ENCODE measurements at regions of chr11 and their contacts with region 1.

Region 1: DNA sequence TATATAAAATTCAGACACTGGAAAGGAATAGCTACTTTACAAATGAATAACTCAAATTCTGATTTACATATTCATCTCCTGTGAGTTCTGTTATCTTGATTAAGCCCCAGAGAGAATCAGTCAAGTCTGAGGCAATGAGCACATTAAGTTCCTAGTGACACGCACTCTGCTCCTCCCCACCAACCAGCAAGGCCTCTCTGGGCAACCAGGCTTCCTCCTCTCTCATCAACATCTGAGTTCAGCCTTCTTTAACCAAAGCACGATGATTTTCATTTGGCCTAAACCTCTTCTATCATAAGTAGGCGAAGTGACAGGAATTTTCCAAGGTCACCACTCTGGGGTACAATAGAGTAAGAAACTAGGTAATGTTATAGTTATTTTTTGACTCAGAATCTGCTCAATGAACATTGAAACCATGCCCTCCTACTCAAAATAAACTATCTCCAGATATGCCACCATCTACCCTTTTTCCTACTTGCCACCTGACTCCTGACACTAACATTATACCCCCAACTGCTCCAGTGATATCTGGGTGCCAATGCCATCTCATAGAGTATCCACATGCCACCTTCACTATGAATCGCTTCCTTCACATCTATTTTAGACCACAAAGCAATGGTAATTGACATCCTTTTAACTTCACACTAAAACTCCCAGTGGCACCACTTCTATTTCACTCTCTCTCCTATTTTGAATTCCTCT is 114.8 kb downstream of the FAM76B start:
- DNase-seq: peak in 7 of 14 experiments; percentile 9 to 39 (median 25)
- ATAC-seq: peak; percentile 64
- H3K4me3 ChIP-seq: no peak overlapping the region
- H3K4me3 Mint-ChIP-seq: no peak overlapping the region
- H3K27ac ChIP-seq: no peak overlapping the region
- H3K27ac Mint-ChIP-seq: peak overlapping the region; percentile 37
- H3K4me1 ChIP-seq: no peaks in the 10 kb centered on the region
- H3K4me1 Mint-ChIP-seq: peaks cover 29% of the 10 kb centered on the region
- H3K27me3 ChIP-seq: no peaks in the 10 kb centered on the region
- H3K27me3 Mint-ChIP-seq: no peaks in the 10 kb centered on the region
- CTCF ChIP-seq: no peak

Region 2: GRCh38 chr11:95605271-95605940 is 69.4 kb before region 1 on chr11:
- CTCF ChIA-PET with region 1: no interaction called
- POLR2A ChIA-PET with region 1: no interaction called
- intact Hi-C with region 1: no loop called
- DNase-seq: peak in 1 of 14 experiments; percentile 7
- ATAC-seq: no peak
- H3K4me3 ChIP-seq: no peak overlapping the region
- H3K4me3 Mint-ChIP-seq: no peak overlapping the region
- H3K27ac ChIP-seq: no peak overlapping the region
- H3K27ac Mint-ChIP-seq: no peak overlapping the region
- H3K4me1 ChIP-seq: peaks cover 3% of the 10 kb centered on the region
- H3K4me1 Mint-ChIP-seq: peaks cover 13% of the 10 kb centered on the region
- H3K27me3 ChIP-seq: no peaks in the 10 kb centered on the region
- H3K27me3 Mint-ChIP-seq: no peaks in the 10 kb centered on the region
- CTCF ChIP-seq: no peak

Region 3: DNA sequence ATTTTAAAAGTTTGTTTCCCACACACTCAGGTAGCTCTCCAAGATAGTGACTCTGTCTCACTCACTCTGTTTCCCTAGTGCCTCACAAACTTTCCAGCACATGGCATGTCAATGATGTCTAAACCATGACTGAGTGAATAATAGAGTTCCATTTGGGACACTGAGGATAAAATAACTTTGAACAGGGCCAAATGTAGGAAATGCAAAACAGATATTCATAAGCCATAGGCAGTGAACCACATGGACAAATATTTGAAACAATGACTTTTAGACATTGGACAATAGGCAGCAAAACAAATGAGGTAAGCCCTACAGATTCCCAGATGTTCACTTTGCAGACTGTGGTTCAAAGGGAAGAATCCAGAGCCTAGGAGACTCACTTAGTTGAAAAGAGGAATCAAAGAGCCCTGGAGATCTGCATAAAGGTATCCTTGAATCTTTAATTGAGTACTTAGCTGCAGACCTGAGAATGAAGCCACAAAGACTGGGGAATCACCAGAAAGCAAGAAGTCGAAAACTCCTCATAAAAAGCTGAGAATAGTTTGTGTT is 58.5 kb before region 1 on chr11:
- CTCF ChIA-PET with region 1: no interaction called
- POLR2A ChIA-PET with region 1: no interaction called
- intact Hi-C with region 1: loop called in 1 of 2 experiments (anchors 5 kb)
- DNase-seq: no peak
- ATAC-seq: no peak
- H3K4me3 ChIP-seq: no peak overlapping the region
- H3K4me3 Mint-ChIP-seq: no peak overlapping the region
- H3K27ac ChIP-seq: no peak overlapping the region
- H3K27ac Mint-ChIP-seq: no peak overlapping the region
- H3K4me1 ChIP-seq: no peaks in the 10 kb centered on the region
- H3K4me1 Mint-ChIP-seq: no peaks in the 10 kb centered on the region
- H3K27me3 ChIP-seq: no peaks in the 10 kb centered on the region
- H3K27me3 Mint-ChIP-seq: no peaks in the 10 kb centered on the region
- CTCF ChIP-seq: no peak

Measured in CD4-positive, alpha-beta T cell (primary cell).